SK-N-SH (cell line): ENCODE measurements at regions of chr1 and their contacts with region 1.

Region 1: DNA sequence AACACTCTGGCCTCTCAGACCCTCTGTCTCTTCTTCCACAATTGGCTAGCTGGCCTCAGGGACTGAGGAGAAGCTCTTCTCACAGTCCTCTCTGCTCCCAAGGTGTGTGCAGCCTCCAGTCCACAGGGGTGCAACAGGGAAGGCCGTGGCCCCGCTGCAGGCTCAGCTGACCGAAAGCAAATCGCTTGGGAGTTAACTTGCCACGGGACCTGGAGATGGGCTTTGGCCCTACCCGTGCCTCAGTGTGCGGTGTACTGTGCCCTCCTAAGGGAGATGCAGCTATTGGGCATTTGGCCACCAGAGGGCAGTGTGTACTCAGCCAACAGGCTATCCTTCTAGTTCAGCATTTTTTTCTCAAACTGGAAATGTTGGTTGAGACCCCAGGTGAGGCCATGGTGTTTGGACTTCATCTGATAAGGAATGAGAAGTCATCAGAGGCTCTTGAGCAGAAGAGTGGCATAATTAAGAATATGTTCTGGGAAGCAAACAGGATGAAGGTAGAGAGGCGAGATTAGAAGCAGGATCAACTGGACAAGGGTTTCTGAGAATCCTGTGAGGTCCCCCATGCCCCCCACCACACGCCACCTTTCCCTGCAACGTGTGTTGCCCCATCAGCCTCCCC is 42.5 kb upstream of the TMEM125 start:
- DNase-seq: peak; percentile 79
- H3K4me3 ChIP-seq: no peak overlapping the region; a peak in 1 of 4 replicates
- H3K27ac ChIP-seq: no peak overlapping the region
- H3K4me1 ChIP-seq: peaks cover 0 to under 1% of the 10 kb centered on the region in 2 experiments; a peak in 1 of 4 replicates
- H3K27me3 ChIP-seq: no peaks in the 10 kb centered on the region
- CTCF ChIP-seq: peak; percentile 94
- EP300 ChIP-seq: no peak
- RAD21 ChIP-seq: peak; percentile 97

Region 2: GRCh38 chr1:43214501-43215444 is 12.5 kb before region 1 on chr1:
- CTCF ChIA-PET with region 1: interaction called, 17 read pairs
- POLR2A ChIA-PET with region 1: no interaction called
- DNase-seq: no peak
- H3K4me3 ChIP-seq: no peak overlapping the region
- H3K27ac ChIP-seq: no peak overlapping the region
- H3K4me1 ChIP-seq: no peaks in the 10 kb centered on the region
- H3K27me3 ChIP-seq: no peaks in the 10 kb centered on the region
- CTCF ChIP-seq: no peak
- EP300 ChIP-seq: no peak
- RAD21 ChIP-seq: no peak

Region 3: DNA sequence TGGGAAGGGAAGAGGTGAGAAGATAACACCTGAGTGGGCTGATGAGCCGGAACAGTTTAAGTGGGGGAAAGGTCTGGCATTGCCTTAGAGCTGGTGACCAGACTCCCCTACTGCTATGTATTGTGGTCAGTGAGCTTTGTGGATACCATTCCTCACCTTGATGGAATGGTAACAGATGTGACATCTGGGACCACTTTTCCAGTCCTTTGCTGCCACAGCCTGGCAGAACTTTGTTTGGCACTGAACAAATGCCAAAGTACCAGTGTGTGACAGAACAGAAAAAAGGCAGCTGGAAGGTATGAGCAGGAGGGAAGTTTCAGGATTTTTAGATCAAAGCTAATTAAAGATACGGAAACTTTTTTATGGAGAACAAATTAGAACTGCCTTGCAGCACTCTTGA is 156.2 kb after region 1 on chr1:
- CTCF ChIA-PET with region 1: interaction called, 17 read pairs
- POLR2A ChIA-PET with region 1: interaction called, 4 read pairs
- DNase-seq: no peak
- H3K4me3 ChIP-seq: no peak overlapping the region
- H3K27ac ChIP-seq: no peak overlapping the region
- H3K4me1 ChIP-seq: peaks cover 5 to 7% of the 10 kb centered on the region in 2 experiments; a peak in 2 of 4 replicates
- H3K27me3 ChIP-seq: no peaks in the 10 kb centered on the region
- CTCF ChIP-seq: peak; percentile 34
- EP300 ChIP-seq: no peak
- RAD21 ChIP-seq: peak; percentile 65

Region 4: DNA sequence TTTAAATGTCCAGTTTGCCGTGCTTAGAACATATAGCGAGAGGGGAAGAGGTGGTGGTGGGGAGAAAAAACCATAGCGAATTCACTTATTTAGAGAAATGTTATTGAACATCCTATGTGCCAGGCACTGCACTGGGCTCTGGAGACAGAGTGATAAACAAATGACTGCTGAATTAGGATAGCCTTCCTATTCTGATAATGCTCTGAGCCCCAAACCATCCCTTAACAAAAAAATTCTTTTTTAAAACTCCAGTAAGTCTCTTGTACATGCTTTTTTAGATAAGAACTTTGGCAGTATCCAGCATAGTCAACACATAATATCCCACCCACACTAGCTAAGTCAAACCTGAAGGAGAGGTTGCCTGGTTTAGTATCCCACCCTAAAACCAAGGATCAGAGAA is 171.0 kb after region 1 on chr1:
- CTCF ChIA-PET with region 1: interaction called, 11 read pairs
- POLR2A ChIA-PET with region 1: no interaction called
- DNase-seq: no peak
- H3K4me3 ChIP-seq: no peak overlapping the region
- H3K27ac ChIP-seq: no peak overlapping the region
- H3K4me1 ChIP-seq: peaks cover 0 to 5% of the 10 kb centered on the region in 2 experiments; a peak in 1 of 4 replicates
- H3K27me3 ChIP-seq: no peaks in the 10 kb centered on the region
- CTCF ChIP-seq: no peak
- EP300 ChIP-seq: no peak
- RAD21 ChIP-seq: no peak

Region 5: DNA sequence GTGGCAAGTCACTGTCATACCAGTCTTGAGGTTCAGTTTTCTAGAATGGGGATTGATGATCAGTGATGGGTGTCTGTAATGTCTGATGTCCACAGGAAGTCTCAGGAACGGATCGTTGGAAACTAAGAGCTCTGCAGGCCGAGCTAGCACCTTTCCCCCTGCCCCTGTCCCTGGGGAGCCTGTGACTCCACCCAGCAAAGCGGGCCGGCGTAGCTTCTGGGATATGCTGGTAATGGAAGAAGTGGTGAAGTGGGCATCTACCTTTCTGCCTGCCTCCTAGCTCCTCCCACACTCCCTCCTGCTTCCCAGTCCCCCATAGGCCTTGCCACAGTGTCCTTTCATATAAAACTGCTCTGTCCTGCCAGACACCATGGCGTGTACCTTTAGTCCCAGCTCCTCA is 213.1 kb after region 1 on chr1:
- CTCF ChIA-PET with region 1: interaction called, 20 read pairs
- POLR2A ChIA-PET with region 1: no interaction called
- DNase-seq: no peak
- H3K4me3 ChIP-seq: no peak overlapping the region
- H3K27ac ChIP-seq: no peak overlapping the region
- H3K4me1 ChIP-seq: no peaks in the 10 kb centered on the region; a peak in 1 of 4 replicates
- H3K27me3 ChIP-seq: no peaks in the 10 kb centered on the region
- CTCF ChIP-seq: no peak
- EP300 ChIP-seq: no peak
- RAD21 ChIP-seq: no peak

Region 6: GRCh38 chr1:43664369-43664768 is 437.1 kb after region 1 on chr1:
- CTCF ChIA-PET with region 1: no interaction called
- POLR2A ChIA-PET with region 1: no interaction called
- DNase-seq: no peak
- H3K4me3 ChIP-seq: no peak overlapping the region
- H3K27ac ChIP-seq: no peak overlapping the region
- H3K4me1 ChIP-seq: no peaks in the 10 kb centered on the region
- H3K27me3 ChIP-seq: no peaks in the 10 kb centered on the region
- CTCF ChIP-seq: no peak
- EP300 ChIP-seq: no peak
- RAD21 ChIP-seq: no peak